ENCODE measurements at regions of chr7 and their contacts with region 1.

Region 1: GRCh38 chr7:73738612-73739374 is at the start of gene ABHD11:
- DNase-seq: peak; percentile 97
- H3K4me3 Mint-ChIP-seq: peak within 1 kb of the TSS; percentile 93
- H3K27ac Mint-ChIP-seq: peak within 1 kb of the TSS; percentile 92
- H3K4me1 Mint-ChIP-seq: peaks cover 10% of the 10 kb centered on the region
- H3K27me3 Mint-ChIP-seq: peaks cover 3% of the 10 kb centered on the region
- total RNA-seq, gene ABHD11: 17.3 and 18.2 TPM in 2 replicates

Region 2: DNA sequence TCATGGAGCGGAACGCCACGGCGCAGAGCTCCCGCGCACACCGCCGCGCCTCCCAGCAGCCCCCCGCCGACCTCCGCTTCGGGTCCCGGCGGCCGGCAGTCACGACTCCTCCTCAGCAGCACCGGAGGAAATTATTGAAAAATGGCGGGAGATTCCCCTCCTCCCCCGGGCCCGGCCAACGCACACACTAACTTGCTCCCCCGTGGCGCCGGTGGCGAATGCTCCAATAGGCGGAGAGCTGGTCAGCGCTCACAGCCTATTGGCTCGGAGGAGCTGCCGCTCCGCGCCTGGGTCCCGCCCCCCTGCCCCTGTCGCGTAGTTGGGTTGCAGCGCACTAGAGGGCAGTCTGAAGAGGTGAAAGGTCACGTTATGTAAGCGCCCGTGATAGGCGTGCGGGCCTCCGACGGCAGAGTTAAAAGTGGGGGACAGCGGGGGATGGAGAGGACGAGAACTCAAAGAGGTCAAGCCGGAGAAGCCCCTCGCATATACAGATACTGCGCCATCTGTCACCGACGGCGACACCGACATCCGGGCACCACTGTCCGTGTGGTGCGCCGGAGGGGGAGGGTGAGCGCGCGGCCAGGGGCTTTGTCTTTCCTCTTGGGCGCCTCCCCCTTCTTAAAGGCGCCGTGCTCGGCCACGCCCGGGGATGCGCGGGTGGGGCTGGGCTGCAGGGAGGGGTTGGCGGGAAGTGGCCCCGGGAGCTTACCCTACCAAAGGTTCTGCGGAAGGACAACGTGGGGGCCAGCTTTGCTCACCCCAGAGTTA is 216.5 kb before region 1 on chr7 and contains the start of gene BAZ1B:
- intact Hi-C with region 1: loop called (anchors 1 kb)
- DNase-seq: peak; percentile 95
- H3K4me3 Mint-ChIP-seq: peak within 1 kb of the TSS; percentile 98
- H3K27ac Mint-ChIP-seq: peak within 1 kb of the TSS; percentile 94
- H3K4me1 Mint-ChIP-seq: peaks cover 52% of the 10 kb centered on the region
- H3K27me3 Mint-ChIP-seq: no peaks in the 10 kb centered on the region
- total RNA-seq, gene BAZ1B: 99.6 and 101 TPM in 2 replicates

Region 3: DNA sequence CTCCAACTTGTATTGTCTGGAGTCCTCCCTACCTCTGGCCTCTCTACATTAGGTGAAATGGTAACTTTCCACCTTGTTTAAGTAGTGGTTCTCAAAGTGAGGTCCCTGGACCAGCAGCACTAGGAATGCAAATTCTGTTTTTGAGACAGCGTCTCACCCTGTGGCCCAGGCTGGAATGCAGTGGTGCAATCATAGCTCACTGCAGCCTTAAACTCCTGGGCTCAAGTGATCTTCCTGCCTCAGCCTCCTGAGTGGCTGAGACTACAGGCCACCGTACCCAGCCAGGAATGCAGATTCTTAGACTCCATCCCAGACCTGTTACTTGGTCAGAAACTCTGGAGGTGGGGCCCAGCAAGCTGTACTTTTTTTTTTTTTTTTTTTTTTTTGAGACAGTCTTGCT is 153.6 kb before region 1 on chr7:
- intact Hi-C with region 1: no loop called
- DNase-seq: no peak
- H3K4me3 Mint-ChIP-seq: no peak overlapping the region
- H3K27ac Mint-ChIP-seq: no peak overlapping the region
- H3K4me1 Mint-ChIP-seq: peaks cover 7% of the 10 kb centered on the region
- H3K27me3 Mint-ChIP-seq: peaks cover 8% of the 10 kb centered on the region

Region 4: GRCh38 chr7:73606801-73607691 is 131.7 kb before region 1 on chr7:
- intact Hi-C with region 1: loop called (anchors 2 kb)
- DNase-seq: peak; percentile 44
- H3K4me3 Mint-ChIP-seq: no peak overlapping the region
- H3K27ac Mint-ChIP-seq: no peak overlapping the region
- H3K4me1 Mint-ChIP-seq: no peaks in the 10 kb centered on the region
- H3K27me3 Mint-ChIP-seq: peaks cover 14% of the 10 kb centered on the region

Region 5: DNA sequence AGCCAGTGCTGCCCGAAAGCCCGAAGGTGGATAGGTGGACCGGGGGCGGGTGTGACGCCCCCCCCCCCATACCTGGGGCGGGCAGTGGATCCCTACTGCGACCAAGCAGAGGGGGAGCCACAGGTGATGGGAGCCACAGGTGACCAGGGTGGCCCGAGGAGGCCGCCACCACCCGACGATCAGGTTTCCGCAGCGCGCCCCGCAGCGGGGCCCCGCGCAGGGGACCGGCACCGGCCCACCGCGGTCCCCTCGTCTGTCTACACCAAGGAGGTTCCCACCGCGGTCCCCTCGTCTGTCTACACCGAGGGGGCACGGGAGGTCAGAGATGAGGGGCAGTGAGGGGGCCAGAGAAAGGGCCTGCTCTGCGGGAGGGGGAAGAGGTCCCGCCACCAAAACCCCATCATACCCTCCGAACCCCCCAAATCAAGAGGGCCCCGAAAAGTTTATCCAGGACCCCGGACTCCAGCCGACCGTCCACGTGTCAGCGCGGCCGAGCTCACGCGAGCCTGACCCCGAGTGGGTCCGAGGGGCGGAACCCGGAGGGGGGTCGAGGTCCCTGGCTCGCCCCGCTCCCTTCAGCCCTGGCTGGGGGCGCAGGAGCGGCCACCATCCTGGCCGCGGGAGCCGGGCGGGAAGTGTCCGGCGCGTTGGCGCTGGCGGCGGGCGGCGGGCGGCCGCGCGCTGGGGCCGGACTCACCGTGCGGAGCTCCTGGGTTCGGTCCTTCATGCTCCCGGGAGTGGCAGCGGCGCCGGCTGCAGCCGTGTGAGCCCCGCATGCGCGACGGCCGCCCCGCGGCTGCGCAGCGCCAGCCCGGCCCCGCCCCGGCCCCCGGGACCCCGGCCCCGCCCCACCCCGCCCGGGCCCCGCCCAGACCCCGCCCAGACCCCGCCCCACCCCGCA is 19.6 kb before region 1 on chr7 and contains the start of gene STX1A:
- intact Hi-C with region 1: loop called (anchors 1 kb)
- DNase-seq: peak; percentile 71
- H3K4me3 Mint-ChIP-seq: peak within 1 kb of the TSS; percentile 89
- H3K27ac Mint-ChIP-seq: peak within 1 kb of the TSS; percentile 62
- H3K4me1 Mint-ChIP-seq: peaks cover 31% of the 10 kb centered on the region
- H3K27me3 Mint-ChIP-seq: peaks cover 9% of the 10 kb centered on the region
- total RNA-seq, gene STX1A: 17.2 and 17.6 TPM in 2 replicates

Region 6: GRCh38 chr7:74083117-74083876 is 344.5 kb after region 1 on chr7 and contains the start of gene LIMK1:
- intact Hi-C with region 1: loop called (anchors 2 kb)
- DNase-seq: peak; percentile 80
- H3K4me3 Mint-ChIP-seq: peak within 1 kb of the TSS; percentile 87
- H3K27ac Mint-ChIP-seq: peak within 1 kb of the TSS; percentile 84
- H3K4me1 Mint-ChIP-seq: peaks cover 9% of the 10 kb centered on the region
- H3K27me3 Mint-ChIP-seq: peaks cover 6% of the 10 kb centered on the region
- total RNA-seq, gene LIMK1: 29.6 and 34.4 TPM in 2 replicates

Region 7: GRCh38 chr7:75679060-75679459 is 1940.3 kb after region 1 on chr7:
- intact Hi-C with region 1: no loop called
- DNase-seq: no peak
- H3K4me3 Mint-ChIP-seq: no peak overlapping the region
- H3K27ac Mint-ChIP-seq: no peak overlapping the region
- H3K4me1 Mint-ChIP-seq: no peaks in the 10 kb centered on the region
- H3K27me3 Mint-ChIP-seq: no peaks in the 10 kb centered on the region